Natural killer cell (primary cell): ENCODE measurements at regions of chr1 and their contacts with region 1.

Region 1: GRCh38 chr1:164660412-164660772 is 101.4 kb downstream of the PBX1 start:
- DNase-seq: peak; percentile 25 to 54
- ATAC-seq: peak; percentile 89 to 98 (median 92)
- H3K4me3 ChIP-seq: no peak overlapping the region
- H3K4me3 Mint-ChIP-seq: peak overlapping the region; percentile 58
- H3K27ac ChIP-seq: no peak overlapping the region
- H3K27ac Mint-ChIP-seq: peak overlapping the region; percentile 60 to 62
- H3K4me1 ChIP-seq: peaks cover 25% of the 10 kb centered on the region
- H3K4me1 Mint-ChIP-seq: peaks cover 42% of the 10 kb centered on the region in 2 donors
- H3K27me3 ChIP-seq: peaks cover 14% of the 10 kb centered on the region
- H3K27me3 Mint-ChIP-seq: peaks cover 21 to 45% of the 10 kb centered on the region in 2 donors
- CTCF ChIP-seq: no peak

Region 2: DNA sequence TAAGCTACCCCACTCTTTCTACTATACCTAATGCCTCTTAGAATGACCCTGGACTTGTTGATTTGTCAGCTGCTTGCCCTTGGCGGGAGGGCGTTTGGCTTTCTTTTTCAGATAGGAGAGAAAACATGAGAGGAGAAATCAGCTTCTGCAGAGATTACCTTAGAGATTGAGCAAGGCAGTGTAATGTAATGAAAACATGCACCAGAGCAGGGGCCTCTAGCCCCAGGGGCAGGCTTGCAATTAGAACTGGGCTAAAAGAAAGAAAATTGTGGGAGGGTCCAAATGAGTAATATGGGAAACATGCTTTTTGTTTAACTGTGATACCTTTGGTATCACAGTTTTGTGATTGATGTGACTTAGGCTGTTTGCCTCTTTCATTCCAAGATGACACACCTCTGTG is 11.8 kb before region 1 on chr1:
- intact Hi-C with region 1: loop called (anchors 1 kb)
- DNase-seq: no peak
- ATAC-seq: no peak
- H3K4me3 ChIP-seq: no peak overlapping the region
- H3K4me3 Mint-ChIP-seq: no peak overlapping the region
- H3K27ac ChIP-seq: no peak overlapping the region
- H3K27ac Mint-ChIP-seq: no peak overlapping the region
- H3K4me1 ChIP-seq: peaks cover 25% of the 10 kb centered on the region
- H3K4me1 Mint-ChIP-seq: peaks cover 32 to 39% of the 10 kb centered on the region in 2 donors
- H3K27me3 ChIP-seq: peaks cover 2% of the 10 kb centered on the region
- H3K27me3 Mint-ChIP-seq: peaks cover 36 to 75% of the 10 kb centered on the region in 2 donors
- CTCF ChIP-seq: no peak

Region 3: GRCh38 chr1:164716992-164717703 is 56.8 kb after region 1 on chr1:
- intact Hi-C with region 1: loop called (anchors 2 kb)
- DNase-seq: peak in 1 of 2 donors; percentile 6
- ATAC-seq: peak; percentile 81 to 97 (median 96)
- H3K4me3 ChIP-seq: no peak overlapping the region
- H3K4me3 Mint-ChIP-seq: peak overlapping the region; percentile 41
- H3K27ac ChIP-seq: no peak overlapping the region
- H3K27ac Mint-ChIP-seq: peak overlapping the region in 1 of 2 donors; percentile 74
- H3K4me1 ChIP-seq: peaks cover 29% of the 10 kb centered on the region
- H3K4me1 Mint-ChIP-seq: peaks cover 45 to 55% of the 10 kb centered on the region in 2 donors
- H3K27me3 ChIP-seq: peaks cover 5% of the 10 kb centered on the region
- H3K27me3 Mint-ChIP-seq: peaks cover 12 to 43% of the 10 kb centered on the region in 2 donors
- CTCF ChIP-seq: no peak

Region 4: DNA sequence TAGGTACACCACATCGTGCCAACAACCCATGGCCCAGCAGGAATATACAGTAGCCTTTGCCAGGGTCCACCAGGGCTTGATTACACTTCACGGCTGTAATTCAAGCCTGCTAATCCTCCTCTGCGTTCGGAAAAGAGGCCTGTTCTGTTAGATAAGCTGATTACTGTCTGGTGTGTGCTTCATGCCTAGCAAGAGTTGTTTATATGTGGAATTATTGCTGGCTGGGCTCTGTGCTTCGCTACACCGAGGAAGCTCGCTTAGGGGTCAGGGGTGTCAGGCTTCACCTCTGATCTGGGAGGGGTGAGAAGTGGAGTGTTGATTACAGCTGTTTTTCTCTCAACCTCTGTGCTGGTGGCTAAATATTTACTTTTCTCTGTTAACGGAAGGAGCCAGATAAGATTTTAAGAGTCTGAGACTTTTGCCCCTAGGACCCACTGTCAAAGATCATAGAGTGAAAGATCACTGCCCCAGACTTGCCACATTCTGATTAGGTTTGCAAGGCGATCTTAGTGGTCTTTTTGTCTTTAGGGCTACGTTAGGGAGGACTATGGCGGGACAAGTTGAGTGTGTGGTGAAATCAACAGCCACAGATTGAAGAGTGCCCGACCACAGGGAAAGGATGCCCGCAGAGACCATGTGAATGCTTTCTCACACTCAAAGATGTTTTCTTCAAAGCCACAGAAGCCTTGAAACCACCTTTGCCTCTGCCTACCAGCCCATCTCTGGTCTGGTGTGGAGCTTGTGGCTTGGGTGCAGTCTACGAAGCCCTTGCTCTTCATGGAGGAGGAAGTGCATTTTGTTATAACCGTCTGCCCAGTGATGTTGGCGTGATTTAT is 114.6 kb after region 1 on chr1:
- intact Hi-C with region 1: loop called (anchors 1 kb)
- DNase-seq: peak; percentile 15 to 36
- ATAC-seq: peak; percentile 70 to 87 (median 73)
- H3K4me3 ChIP-seq: no peak overlapping the region
- H3K4me3 Mint-ChIP-seq: peak overlapping the region; percentile 73
- H3K27ac ChIP-seq: no peak overlapping the region
- H3K27ac Mint-ChIP-seq: peak overlapping the region; percentile 67 to 73
- H3K4me1 ChIP-seq: peaks cover 27% of the 10 kb centered on the region
- H3K4me1 Mint-ChIP-seq: peaks cover 40 to 51% of the 10 kb centered on the region in 2 donors
- H3K27me3 ChIP-seq: peaks cover 30% of the 10 kb centered on the region
- H3K27me3 Mint-ChIP-seq: peaks cover 56 to 75% of the 10 kb centered on the region in 2 donors
- CTCF ChIP-seq: no peak